Activated T-helper 1 cell treated with anti-CD3 and anti-CD28 coated beads, Interleukin-12 subunit alpha, Interleukin-12 subunit beta, Interleukin-2, Interleukin-4 antibody, amounts not matched to agents 30 ng/mL and 10 ng/mL and 1 ng/mL, durations not matched to agents 14 hours and 24 hours and 36 hours (primary cell): ENCODE measurements at regions of chr12 and their contacts with region 1.

Region 1: DNA sequence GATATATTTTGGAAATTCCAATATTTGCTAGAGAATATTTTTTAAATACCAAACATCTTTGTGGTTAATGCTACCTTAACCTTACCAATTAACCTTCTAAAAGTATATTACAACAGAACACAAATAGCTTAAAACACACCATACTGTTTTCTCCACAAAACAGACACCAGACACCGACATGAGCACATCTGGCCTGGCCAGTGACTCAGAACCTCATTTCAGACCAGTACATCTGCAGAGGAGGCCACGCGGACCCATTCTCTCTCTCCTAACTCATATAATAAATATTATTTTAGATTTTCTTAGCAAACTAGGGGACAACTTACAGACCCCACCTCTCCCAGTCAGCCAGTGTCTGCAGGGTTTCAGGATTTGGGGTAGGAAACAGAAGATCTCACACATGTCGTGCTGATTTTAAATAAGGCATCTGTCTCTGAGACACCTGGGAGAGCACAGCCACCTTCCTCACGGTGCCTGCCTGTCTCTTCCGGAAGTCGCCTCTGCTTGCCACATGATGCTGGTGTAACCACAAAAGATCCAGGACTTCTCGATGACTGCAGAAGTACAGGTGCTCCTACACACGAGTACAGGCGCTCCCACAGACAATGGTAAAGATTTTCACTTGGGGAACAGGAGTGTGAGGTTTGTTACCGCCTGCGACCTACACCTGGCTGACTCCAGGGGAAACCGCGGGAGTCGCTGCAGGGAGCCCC is 9.7 kb upstream of the ANKLE2 start:
- DNase-seq: peak; percentile 33
- H3K4me3 Mint-ChIP-seq: no peak overlapping the region
- H3K27ac Mint-ChIP-seq: peak overlapping the region; percentile 72
- H3K4me1 Mint-ChIP-seq: peaks cover 22% of the 10 kb centered on the region
- H3K27me3 Mint-ChIP-seq: no peaks in the 10 kb centered on the region

Region 2: DNA sequence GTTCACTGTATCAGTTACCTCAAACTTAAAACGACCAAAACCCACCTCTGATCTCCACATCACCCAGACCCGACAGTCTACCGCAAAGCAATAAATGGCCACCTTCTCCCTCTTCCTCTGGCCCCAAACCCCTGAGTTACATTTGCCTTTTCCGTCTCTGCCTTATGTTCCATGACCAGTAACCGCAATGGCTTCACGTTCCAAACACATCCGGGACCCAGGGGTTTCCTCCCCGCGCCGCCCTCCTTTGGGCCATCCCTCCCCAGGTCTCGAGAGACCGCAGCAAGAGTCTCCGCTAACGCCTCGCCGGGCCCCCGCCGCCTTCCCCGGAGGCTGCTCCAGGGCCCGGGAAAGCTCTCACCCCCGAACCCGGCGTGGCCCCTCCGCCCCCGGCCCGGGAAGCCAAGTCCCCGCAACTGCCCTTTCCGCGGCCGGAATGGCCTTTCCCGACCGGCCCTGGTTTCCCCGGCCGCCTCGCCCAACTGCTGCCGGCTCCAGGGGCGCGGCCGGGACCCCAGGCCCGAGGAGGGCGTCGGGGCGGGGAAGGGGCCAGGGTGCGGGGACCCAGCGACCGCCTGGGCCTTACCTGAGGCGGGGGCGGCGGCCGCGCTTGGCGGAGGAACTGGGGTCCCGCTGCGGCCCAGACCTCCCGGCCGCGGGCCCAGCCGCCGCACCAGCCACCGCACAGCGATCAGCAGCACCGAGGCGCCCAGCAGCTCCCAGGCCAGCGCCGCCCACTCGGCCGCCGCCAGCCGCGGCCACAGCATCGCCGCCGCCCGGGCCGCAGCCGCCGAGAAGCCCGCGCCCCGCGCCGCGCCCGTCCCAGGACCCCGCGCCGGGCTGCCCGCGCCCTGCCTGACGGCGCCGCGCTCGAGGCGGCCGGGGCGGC is 10.0 kb before region 1 on chr12 and contains the start of gene ANKLE2:
- intact Hi-C with region 1: loop called (anchors 1 kb)
- DNase-seq: peak; percentile 74
- H3K4me3 Mint-ChIP-seq: peak within 1 kb of the TSS; percentile 93
- H3K27ac Mint-ChIP-seq: peak within 1 kb of the TSS; percentile 96
- H3K4me1 Mint-ChIP-seq: peaks cover 24% of the 10 kb centered on the region
- H3K27me3 Mint-ChIP-seq: no peaks in the 10 kb centered on the region
- total RNA-seq, gene ANKLE2: 151 and 156 TPM in 2 replicates

Region 3: GRCh38 chr12:132807295-132808092 is 36.2 kb after region 1 on chr12:
- intact Hi-C with region 1: loop called (anchors 5 kb)
- DNase-seq: no peak
- H3K4me3 Mint-ChIP-seq: no peak overlapping the region
- H3K27ac Mint-ChIP-seq: no peak overlapping the region
- H3K4me1 Mint-ChIP-seq: peaks cover 22% of the 10 kb centered on the region
- H3K27me3 Mint-ChIP-seq: no peaks in the 10 kb centered on the region

Region 4: GRCh38 chr12:133058203-133059125 is 287.2 kb after region 1 on chr12:
- intact Hi-C with region 1: no loop called
- DNase-seq: no peak
- H3K4me3 Mint-ChIP-seq: no peak overlapping the region
- H3K27ac Mint-ChIP-seq: no peak overlapping the region
- H3K4me1 Mint-ChIP-seq: no peaks in the 10 kb centered on the region
- H3K27me3 Mint-ChIP-seq: no peaks in the 10 kb centered on the region